Common myeloid progenitor, CD34-positive (primary cell): ENCODE measurements at regions of chr9 and their contacts with region 1.

Region 1: GRCh38 chr9:17116400-17116837 is 18.4 kb upstream of the CNTLN start:
- DNase-seq: peak; percentile 25 to 38 (median 30)
- H3K4me3 ChIP-seq: no peak overlapping the region
- H3K27ac ChIP-seq: no peak overlapping the region
- H3K4me1 ChIP-seq: no peaks in the 10 kb centered on the region
- H3K27me3 ChIP-seq: no peaks in the 10 kb centered on the region

Region 2: DNA sequence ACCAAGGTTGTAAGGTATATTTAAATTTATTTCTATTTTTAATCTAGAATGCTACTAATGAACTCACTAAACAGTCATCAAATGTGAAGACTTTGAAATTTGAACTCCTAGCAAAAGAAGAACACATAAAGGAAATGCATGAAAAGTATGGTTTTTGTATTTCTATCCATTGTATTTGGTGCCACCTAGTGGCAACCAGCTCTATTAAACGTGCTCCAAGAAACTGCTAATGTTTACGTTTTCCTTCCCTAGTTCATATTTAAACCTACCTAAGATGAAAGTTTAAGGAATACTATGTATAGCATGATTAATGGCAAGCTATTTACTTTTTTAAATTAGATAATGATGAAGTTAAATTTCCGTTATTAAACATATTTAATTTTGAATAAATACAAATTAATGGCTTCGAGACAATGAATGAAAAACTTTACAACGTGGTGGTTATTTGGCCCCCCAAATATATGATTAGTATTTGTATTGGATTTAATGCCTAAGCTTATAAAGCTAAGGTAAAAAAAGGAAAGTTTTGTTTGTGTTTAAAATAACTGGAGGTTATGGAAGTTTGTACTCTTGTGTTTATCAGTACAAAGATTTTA is 346.5 kb after region 1 on chr9:
- CTCF ChIA-PET with region 1: interaction called, 34 read pairs
- POLR2A ChIA-PET with region 1: no interaction called
- DNase-seq: peak; percentile 49 to 78 (median 67)
- H3K4me3 ChIP-seq: no peak overlapping the region
- H3K27ac ChIP-seq: no peak overlapping the region
- H3K4me1 ChIP-seq: no peaks in the 10 kb centered on the region
- H3K27me3 ChIP-seq: no peaks in the 10 kb centered on the region